Dendritic cell treated with granulocyte-macrophage colony-stimulating factor and Interleukin-4, amounts not matched to agents 40 ng/mL and 50 ng/mL, for 4 days (primary cell): ENCODE measurements at regions of chr7 and their contacts with region 1.

Region 1: GRCh38 chr7:151759591-151760042 is 117.3 kb downstream of the PRKAG2 start:
- H3K4me3 Mint-ChIP-seq: no peak overlapping the region
- H3K27ac Mint-ChIP-seq: no peak overlapping the region
- H3K4me1 Mint-ChIP-seq: peaks cover 60% of the 10 kb centered on the region
- H3K27me3 Mint-ChIP-seq: no peaks in the 10 kb centered on the region

Region 2: DNA sequence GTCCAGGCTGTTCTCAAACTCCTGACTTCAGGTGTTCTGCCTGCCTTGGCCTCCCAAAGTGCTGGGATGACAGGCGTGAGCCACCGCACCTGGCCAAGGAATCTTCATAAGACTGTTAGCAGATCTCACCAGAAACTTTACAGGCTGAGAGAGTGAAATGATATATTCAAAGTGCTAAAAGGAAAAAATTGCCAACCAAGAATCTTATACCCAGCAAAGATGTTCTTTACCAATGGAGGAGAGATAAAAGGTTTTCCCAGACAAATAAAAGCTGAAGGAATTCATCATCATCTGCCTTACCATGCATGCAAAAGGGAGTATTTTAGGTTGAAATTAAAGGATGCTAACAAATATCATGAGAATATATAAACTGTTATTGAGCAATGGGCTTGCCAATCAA is 1221.4 kb before region 1 on chr7:
- intact Hi-C with region 1: no loop called
- H3K4me3 Mint-ChIP-seq: no peak overlapping the region
- H3K27ac Mint-ChIP-seq: no peak overlapping the region
- H3K4me1 Mint-ChIP-seq: peaks cover 5% of the 10 kb centered on the region
- H3K27me3 Mint-ChIP-seq: no peaks in the 10 kb centered on the region

Region 3: DNA sequence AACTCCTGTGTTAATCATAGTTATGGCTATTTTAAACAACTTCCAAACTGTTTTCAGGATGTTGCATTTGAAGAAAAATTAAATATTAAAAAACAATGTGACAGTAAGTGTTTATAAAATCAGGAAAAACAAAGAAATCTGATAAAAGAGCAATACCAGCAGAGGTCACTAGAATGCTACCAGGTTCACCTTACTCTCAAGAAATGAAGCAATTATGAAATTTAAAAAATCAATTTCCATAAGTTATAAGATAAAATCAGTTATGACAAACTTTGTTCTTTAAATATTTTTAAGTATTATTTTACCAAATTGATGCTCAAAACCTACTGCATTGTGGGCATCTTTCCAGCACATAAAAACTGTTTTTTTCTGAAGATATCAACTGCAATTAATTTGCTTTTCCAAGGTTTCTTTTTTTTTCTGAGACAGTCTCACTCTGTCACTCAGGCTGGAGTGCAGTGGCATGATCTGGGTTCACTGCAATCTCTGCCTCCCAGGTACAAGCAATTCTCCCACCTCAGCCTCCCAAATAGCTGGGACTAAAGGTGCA is 189.2 kb before region 1 on chr7:
- intact Hi-C with region 1: loop called (anchors 5 kb)
- H3K4me3 Mint-ChIP-seq: no peak overlapping the region
- H3K27ac Mint-ChIP-seq: no peak overlapping the region
- H3K4me1 Mint-ChIP-seq: no peaks in the 10 kb centered on the region
- H3K27me3 Mint-ChIP-seq: no peaks in the 10 kb centered on the region

Region 4: DNA sequence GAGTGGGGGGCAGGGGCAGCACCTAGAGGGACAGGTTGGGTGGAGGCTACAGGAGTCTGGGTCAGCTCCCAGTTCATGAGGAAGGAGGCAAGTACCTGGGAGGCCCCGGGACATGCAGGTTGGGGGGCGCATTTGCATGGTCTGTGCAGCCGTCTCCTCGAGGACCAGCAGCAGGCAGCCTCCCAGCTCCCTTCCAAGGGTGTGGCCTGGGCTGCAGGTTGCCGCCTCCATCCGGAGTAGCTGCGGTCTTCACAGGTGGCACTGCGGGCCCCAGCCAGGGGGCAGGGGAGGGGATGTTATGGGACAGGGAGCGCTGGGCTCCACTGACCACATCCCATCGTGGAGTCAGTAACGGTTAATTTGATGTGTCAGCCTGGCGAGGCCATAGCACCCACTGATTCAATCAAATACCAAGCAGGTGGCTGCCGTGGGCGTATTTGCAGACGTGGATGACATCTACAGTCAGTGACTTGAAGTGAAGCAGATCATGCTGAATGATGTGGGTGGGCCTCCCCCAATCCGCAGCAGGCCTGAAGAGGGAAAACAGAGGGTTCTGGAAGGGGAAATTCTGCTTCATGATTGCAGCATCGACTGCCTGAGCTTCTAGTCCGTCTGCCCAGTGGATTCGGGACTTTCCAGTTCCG is 35.7 kb after region 1 on chr7:
- intact Hi-C with region 1: no loop called
- H3K4me3 Mint-ChIP-seq: no peak overlapping the region
- H3K27ac Mint-ChIP-seq: peak overlapping the region; percentile 93
- H3K4me1 Mint-ChIP-seq: peaks cover 93% of the 10 kb centered on the region
- H3K27me3 Mint-ChIP-seq: no peaks in the 10 kb centered on the region